ENCODE measurements at regions of chr10 and their contacts with region 1.

Region 1: GRCh38 chr10:100508691-100509150 is 10.9 kb downstream of the SEC31B start:
- DNase-seq: no peak
- H3K4me3 ChIP-seq: no peak overlapping the region
- H3K27ac ChIP-seq: no peak overlapping the region
- H3K4me1 ChIP-seq: no peaks in the 10 kb centered on the region; a peak in 1 of 7 replicates
- H3K27me3 ChIP-seq: peaks cover 0 to 11% (median 4%) of the 10 kb centered on the region in 4 experiments; a peak in 3 of 7 replicates
- CTCF ChIP-seq: peak in 2 of 3 experiments; percentile 81 to 88; a peak in 3 of 4 replicates
- EP300 ChIP-seq: no peak
- POLR2A ChIP-seq: no peak
- RAD21 ChIP-seq: peak; percentile 95 to 98

Region 2: DNA sequence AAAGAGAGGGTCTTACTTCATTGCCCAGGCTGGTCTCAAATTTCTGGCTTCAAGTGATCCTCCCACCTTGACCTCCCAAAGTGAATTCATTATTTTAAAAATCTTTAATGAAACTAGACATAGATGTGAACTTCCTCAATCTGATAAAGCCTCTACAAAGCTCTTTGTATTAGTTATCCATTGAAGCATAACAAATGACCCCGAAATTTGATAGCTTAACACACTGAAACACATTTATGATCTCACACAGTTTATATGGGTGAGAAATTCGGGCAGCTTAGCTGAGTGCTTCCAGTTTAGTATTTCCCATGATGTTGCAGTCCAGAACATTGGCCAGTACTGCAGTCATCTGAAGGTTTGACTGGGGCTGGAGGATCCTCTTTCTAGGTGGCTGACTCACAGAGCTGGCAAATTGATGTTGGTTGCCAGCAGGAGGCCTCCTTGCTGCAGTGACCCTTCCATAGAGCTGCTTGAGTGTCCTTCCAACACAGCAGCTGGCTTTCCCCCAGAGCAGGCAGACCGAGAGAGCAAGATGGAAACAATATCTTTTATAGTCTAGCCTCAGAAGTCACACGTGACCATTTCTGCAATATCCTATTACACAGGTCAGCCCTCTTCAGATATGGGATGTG is 62.5 kb before region 1 on chr10:
- CTCF ChIA-PET with region 1: interaction called, 63 read pairs
- POLR2A ChIA-PET with region 1: no interaction called
- DNase-seq: no peak
- H3K4me3 ChIP-seq: no peak overlapping the region
- H3K27ac ChIP-seq: no peak overlapping the region
- H3K4me1 ChIP-seq: no peaks in the 10 kb centered on the region
- H3K27me3 ChIP-seq: no peaks in the 10 kb centered on the region; a peak in 1 of 7 replicates
- CTCF ChIP-seq: no peak
- EP300 ChIP-seq: no peak
- POLR2A ChIP-seq: no peak
- RAD21 ChIP-seq: no peak

Region 3: DNA sequence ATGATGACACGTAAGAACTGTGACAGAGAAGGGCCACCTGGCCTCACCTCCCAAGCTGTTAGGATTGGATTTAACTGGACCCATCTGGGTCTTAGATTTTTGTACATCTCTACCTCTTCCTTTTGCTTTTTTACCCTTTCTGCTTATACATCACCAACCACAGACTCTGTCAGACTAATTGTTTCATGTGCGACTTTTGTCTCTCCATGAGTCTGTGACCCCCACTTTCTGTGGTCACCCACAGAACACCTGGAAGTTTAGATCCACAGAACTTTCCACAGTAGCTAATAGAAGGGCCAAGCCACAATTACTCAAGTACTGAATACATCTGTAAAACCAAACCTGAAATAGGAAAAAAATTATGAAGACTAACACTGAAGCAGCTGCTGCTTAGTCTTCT is 12.2 kb before region 1 on chr10:
- CTCF ChIA-PET with region 1: interaction called, 75 read pairs
- POLR2A ChIA-PET with region 1: no interaction called
- DNase-seq: no peak
- H3K4me3 ChIP-seq: no peak overlapping the region
- H3K27ac ChIP-seq: no peak overlapping the region
- H3K4me1 ChIP-seq: no peaks in the 10 kb centered on the region
- H3K27me3 ChIP-seq: peaks cover 7 to 50% (median 21%) of the 10 kb centered on the region in 4 experiments
- CTCF ChIP-seq: no peak
- EP300 ChIP-seq: no peak
- POLR2A ChIP-seq: no peak
- RAD21 ChIP-seq: no peak

Region 4: GRCh38 chr10:100524638-100525037 is 15.9 kb after region 1 on chr10:
- CTCF ChIA-PET with region 1: interaction called, 84 read pairs
- POLR2A ChIA-PET with region 1: interaction called, 3 read pairs
- DNase-seq: no peak
- H3K4me3 ChIP-seq: no peak overlapping the region
- H3K27ac ChIP-seq: no peak overlapping the region
- H3K4me1 ChIP-seq: peaks cover 0 to 2% (median 0%) of the 10 kb centered on the region in 4 experiments; a peak in 2 of 7 replicates
- H3K27me3 ChIP-seq: peaks cover 0 to 12% (median 10%) of the 10 kb centered on the region in 4 experiments; a peak in 5 of 7 replicates
- CTCF ChIP-seq: no peak
- EP300 ChIP-seq: no peak
- POLR2A ChIP-seq: no peak
- RAD21 ChIP-seq: no peak

Measured in H1 (cell line).